OCI-LY7 (cell line): ENCODE measurements at regions of chr1 and their contacts with region 1.

Region 1: DNA sequence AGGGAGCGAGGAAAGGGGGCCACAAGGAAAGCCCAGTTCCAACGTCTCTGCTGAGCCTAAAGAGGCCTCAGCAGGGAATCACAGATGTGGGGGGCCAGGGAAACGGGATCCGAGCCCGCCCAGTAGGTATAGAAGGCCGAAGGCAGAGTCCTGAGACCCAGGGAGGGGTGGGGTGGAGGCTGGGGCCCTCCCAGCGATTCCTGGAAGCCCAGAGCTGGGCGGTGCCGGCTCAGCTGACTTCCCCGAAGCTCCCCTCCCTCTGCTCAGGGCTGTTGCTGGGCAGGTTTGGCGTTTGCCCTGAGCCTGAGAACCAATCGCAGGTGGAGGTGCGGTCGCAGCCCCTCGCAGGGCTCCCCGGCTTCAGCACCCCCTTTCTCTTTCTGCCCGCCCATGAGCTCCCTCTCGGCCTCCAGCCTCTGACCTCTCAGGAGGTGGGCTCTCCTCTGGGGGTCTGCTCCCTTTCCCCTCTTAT is 12.8 kb downstream of the ADAMTSL4 start:
- DNase-seq: peak; percentile 83
- H3K4me3 ChIP-seq: peak overlapping the region; percentile 74
- H3K27ac ChIP-seq: peak overlapping the region; percentile 99
- H3K4me1 ChIP-seq: peaks cover 72% of the 10 kb centered on the region
- CTCF ChIP-seq: no peak

Region 2: GRCh38 chr1:150259758-150260669 is 302.0 kb before region 1 on chr1:
- CTCF ChIA-PET with region 1: no interaction called
- POLR2A ChIA-PET with region 1: no interaction called
- intact Hi-C with region 1: loop called (anchors 1 kb)
- DNase-seq: no peak
- H3K4me3 ChIP-seq: no peak overlapping the region
- H3K27ac ChIP-seq: no peak overlapping the region
- H3K4me1 ChIP-seq: peaks cover 24% of the 10 kb centered on the region
- CTCF ChIP-seq: no peak

Region 3: GRCh38 chr1:150486964-150487762 is 74.8 kb before region 1 on chr1 and contains the start of gene TARS2:
- CTCF ChIA-PET with region 1: no interaction called
- POLR2A ChIA-PET with region 1: interaction called, 6 read pairs
- intact Hi-C with region 1: loop called (anchors 1 kb)
- DNase-seq: peak; percentile 99
- H3K4me3 ChIP-seq: peak within 1 kb of the TSS; percentile 89
- H3K27ac ChIP-seq: peak within 1 kb of the TSS; percentile 50
- H3K4me1 ChIP-seq: peaks cover 18% of the 10 kb centered on the region
- CTCF ChIP-seq: no peak
- total RNA-seq, gene TARS2: 29.4 and 42.0 TPM in 2 replicates

Region 4: GRCh38 chr1:150621497-150622302 is 59.7 kb after region 1 on chr1:
- CTCF ChIA-PET with region 1: interaction called, 12 read pairs
- POLR2A ChIA-PET with region 1: interaction called, 9 read pairs
- intact Hi-C with region 1: loop called (anchors 1 kb)
- DNase-seq: peak; percentile 72
- H3K4me3 ChIP-seq: no peak overlapping the region
- H3K27ac ChIP-seq: peak overlapping the region; percentile 65
- H3K4me1 ChIP-seq: peaks cover 38% of the 10 kb centered on the region
- CTCF ChIP-seq: peak; percentile 87

Region 5: DNA sequence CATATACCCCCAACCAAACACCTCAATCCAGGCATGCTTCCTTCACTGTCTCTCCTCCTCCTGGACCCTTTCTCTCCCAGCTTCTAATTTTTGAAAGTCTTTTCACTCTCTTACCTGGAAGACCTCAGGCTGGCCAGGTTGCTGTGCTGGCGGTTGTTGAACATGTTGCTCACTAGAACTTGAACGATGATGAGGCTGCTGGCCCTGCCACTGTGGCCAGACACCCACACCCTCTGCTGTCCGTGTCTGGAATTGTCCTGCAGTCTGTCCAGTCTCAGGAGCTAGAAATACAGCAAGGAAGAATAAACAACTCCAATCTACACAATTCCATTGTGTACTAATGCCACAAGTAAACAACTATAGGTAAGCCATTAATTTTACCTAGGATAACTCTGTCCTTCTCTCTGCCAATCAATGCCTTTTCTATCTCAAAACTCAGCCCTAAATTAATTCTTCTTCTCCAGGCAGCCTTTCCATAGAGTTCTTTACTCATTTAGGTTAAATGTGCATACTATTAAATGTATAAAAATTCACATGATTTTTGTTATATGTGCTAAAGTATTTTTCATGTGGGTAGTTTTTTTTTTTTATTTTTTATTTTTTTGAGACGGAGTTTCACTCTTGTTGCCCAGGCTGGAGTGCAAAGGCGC is 251.2 kb after region 1 on chr1:
- CTCF ChIA-PET with region 1: no interaction called
- POLR2A ChIA-PET with region 1: no interaction called
- intact Hi-C with region 1: loop called (anchors 1 kb)
- DNase-seq: peak; percentile 36
- H3K4me3 ChIP-seq: no peak overlapping the region
- H3K27ac ChIP-seq: no peak overlapping the region
- H3K4me1 ChIP-seq: no peaks in the 10 kb centered on the region
- CTCF ChIP-seq: peak; percentile 75

Region 6: DNA sequence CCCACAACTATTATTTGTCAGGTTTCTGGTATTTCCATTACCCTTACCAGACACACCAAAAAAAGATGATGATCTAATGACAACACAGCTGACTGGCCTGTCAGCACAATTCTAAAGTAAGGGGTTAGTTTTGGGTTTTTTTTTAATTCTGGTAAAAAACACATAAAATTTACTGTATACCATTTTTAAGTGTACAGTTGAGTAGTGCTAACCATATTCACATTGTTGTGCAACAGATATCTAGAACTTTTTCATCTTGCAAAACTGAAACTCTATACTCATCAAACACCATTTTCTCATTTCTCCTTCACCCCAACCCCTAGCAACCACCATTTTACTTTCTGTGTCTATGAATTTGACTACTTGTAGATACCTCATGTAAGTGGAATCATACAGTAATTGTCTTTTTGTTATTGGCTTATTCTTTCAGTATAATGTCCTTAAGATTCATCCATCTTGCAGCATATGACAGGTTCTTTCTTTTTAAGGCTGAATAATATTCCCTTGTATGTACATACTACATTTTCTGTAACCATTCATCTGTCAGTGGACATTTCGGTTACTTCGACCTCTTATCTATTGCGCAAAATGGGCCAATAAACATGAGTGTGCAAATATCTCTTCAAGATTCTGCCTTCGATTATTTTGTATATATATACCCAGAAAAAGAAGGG is 284.6 kb after region 1 on chr1:
- CTCF ChIA-PET with region 1: no interaction called
- POLR2A ChIA-PET with region 1: no interaction called
- intact Hi-C with region 1: no loop called
- DNase-seq: no peak
- H3K4me3 ChIP-seq: no peak overlapping the region
- H3K27ac ChIP-seq: no peak overlapping the region
- H3K4me1 ChIP-seq: no peaks in the 10 kb centered on the region
- CTCF ChIP-seq: no peak

Region 7: DNA sequence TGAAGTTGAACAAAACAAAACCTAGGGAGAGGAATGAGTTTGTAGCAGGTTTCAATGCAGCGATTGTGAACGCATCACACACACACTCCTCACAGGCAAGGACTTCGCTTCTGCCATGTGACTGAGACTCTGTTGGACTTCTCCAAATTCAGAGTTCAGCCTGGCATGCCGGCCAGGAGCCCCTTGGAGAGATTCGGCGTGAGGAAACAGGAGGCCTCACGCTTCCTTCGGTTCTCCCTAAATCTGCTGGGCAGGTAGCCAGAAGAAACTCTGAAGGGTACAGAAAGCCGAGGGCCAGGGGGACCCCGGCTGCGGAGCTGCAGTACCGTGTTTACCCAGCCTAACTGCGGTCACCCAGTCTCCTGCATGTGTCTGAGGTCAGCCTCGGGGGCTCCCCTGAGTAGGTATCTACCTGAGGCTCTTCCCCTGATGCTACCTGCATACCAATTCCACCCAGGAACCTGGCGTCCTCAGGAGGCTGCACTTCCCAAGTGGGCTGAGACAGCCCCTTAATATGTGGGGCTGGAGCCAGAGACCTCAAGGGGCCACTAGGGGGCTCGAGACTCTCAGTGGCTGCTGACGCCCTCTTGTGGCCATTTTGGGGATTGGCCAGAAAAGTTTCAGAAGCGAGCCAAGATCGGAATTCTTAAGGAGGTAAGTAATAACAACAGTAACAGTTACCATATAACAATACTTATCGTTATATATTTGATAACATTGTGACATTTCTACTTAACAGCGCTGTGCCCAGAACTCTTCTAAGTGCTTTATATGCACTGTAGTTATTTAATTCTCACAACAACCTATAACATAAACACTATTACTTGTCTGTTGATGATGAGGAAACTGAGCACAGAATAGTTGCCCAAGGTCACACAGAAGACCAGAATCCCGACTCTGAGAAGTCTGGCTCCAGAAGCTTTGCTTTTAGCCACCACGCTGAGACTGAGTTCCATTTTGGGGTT is 417.4 kb after region 1 on chr1:
- CTCF ChIA-PET with region 1: no interaction called
- POLR2A ChIA-PET with region 1: no interaction called
- intact Hi-C with region 1: loop called (anchors 2 kb)
- DNase-seq: peak; percentile 92
- H3K4me3 ChIP-seq: no peak overlapping the region
- H3K27ac ChIP-seq: no peak overlapping the region
- H3K4me1 ChIP-seq: peaks cover 44% of the 10 kb centered on the region
- CTCF ChIP-seq: peak; percentile 100